Aorta (tissue), 5 donors: ENCODE measurements at regions of chr10 and their contacts with region 1.

Region 1: GRCh38 chr10:63515002-63515763 is 6.0 kb upstream of the REEP3 start:
- DNase-seq: no peak
- ATAC-seq: peak; percentile 50
- H3K4me3 ChIP-seq: peak overlapping the region in 1 of 2 donors; percentile 4
- H3K27ac ChIP-seq: peak overlapping the region; percentile 23 to 75
- H3K4me1 ChIP-seq: peaks cover 0 to 2% of the 10 kb centered on the region in 2 donors
- H3K27me3 ChIP-seq: no peaks in the 10 kb centered on the region

Region 2: GRCh38 chr10:63206997-63207811 is 308.0 kb before region 1 on chr10:
- intact Hi-C with region 1: loop called in 1 of 2 experiments (anchors 10 kb)
- DNase-seq: peak in 1 of 2 donors; percentile 55
- ATAC-seq: peak; percentile 74
- H3K4me3 ChIP-seq: peak overlapping the region; percentile 11 to 32
- H3K27ac ChIP-seq: peak overlapping the region; percentile 64 to 82
- H3K4me1 ChIP-seq: peaks cover 3 to 14% of the 10 kb centered on the region in 2 donors
- H3K27me3 ChIP-seq: no peaks in the 10 kb centered on the region